GM10248 (cell line): ENCODE measurements at regions of chr13 and their contacts with region 1.

Region 1: GRCh38 chr13:102913914-102914313 is 68.1 kb downstream of the ERCC5 start:
- DNase-seq: no peak
- CTCF ChIP-seq: no peak

Region 2: GRCh38 chr13:102870677-102871415 is 43.1 kb before region 1 on chr13:
- CTCF ChIA-PET with region 1: interaction called, 12 read pairs
- POLR2A ChIA-PET with region 1: no interaction called
- DNase-seq: peak; percentile 73
- CTCF ChIP-seq: peak; percentile 72

Region 3: DNA sequence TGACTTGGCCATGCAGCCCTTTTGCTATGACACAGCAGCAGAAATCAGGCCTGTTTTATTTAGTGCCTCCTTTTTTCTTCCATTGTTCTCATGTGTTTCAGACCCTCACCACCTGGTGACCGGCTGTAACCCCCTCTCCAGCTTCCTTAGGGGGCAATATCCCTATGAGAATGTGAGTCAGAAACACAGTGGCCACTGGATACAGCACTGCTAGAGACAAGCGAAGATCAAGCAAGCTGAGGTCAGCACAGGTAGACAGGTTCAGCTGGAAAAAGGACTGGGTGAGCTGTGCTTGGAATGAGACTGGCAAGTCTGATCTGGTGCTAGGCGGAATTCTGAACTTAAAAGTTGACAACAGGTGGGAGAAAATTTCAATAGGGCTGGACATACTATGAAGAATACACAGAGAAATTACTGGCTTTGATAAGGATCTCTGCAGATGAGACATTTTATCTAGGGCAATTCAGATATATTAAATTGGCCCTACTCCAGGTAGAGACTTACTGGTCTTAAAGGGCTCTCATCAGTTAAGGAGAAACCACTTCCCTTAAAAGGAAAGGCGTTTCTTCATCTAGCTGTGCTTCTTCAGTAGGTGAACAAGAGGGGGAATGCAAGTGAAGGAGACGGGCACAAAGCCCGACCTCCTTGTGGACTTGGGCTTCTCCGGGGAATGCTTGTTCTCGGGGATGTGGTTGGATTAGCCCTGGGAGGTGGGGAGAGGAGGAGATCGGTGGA is 15.2 kb after region 1 on chr13:
- CTCF ChIA-PET with region 1: interaction called, 23 read pairs
- POLR2A ChIA-PET with region 1: no interaction called
- DNase-seq: no peak
- CTCF ChIP-seq: no peak

Region 4: GRCh38 chr13:102970542-102970941 is 56.6 kb after region 1 on chr13:
- CTCF ChIA-PET with region 1: no interaction called
- POLR2A ChIA-PET with region 1: no interaction called
- DNase-seq: peak; percentile 58
- CTCF ChIP-seq: no peak

Region 5: GRCh38 chr13:103055166-103055565 is 141.3 kb after region 1 on chr13:
- CTCF ChIA-PET with region 1: no interaction called
- POLR2A ChIA-PET with region 1: no interaction called
- DNase-seq: no peak
- CTCF ChIP-seq: no peak

Region 6: DNA sequence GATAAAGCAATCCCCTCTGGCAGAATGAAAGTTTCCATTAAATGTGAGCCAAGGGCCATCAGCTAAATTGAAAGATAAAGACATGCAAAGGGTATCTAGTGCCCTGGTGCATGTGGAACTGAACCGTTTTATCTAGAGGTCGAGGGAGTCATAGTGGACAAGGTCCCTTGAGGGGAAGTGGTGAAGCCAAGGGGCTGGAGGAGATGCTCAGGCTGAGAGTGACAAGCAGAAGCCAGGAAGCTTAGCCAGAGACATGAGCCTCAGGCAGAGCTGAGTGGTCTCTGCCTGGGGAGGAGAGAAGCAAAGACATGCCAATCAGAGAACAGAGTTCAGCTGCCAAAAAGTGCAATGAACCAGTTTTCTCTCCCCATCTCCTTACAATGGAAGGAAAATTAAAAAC is 220.4 kb after region 1 on chr13:
- CTCF ChIA-PET with region 1: interaction called, 10 read pairs
- POLR2A ChIA-PET with region 1: no interaction called
- DNase-seq: no peak
- CTCF ChIP-seq: no peak

Region 7: DNA sequence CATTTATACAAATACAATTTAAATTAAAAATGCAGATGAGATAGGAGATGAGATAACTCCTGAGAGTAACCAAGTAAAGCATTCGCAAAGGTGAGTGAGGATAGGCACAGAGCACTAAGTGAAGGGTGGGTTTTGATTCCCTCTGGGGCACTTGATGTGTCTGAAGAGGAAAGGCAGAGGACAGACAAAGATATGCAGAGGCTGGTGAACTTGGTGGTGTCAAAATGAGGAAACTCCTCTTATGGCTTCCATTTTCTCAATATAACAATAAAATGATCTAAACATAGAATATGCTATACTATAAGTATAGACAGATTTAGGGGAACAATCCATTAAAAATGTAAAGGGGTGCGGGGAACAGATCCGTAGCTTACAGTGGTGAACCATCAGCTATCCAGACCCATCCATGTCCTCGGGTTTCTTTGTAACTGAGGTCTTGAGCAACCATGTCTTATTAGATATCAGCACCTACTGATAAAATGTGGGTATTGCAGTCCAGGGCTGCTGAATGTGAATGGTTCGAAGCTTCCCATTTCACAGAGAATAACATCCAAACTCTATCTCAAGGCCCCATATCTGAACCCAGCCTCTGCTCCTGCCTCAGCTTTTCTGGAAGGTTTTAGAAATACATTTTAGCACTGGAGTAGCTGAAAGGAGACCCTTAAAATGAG is 226.2 kb after region 1 on chr13:
- CTCF ChIA-PET with region 1: interaction called, 71 read pairs
- POLR2A ChIA-PET with region 1: interaction called, 3 read pairs
- DNase-seq: peak; percentile 52
- CTCF ChIP-seq: peak; percentile 75

Region 8: GRCh38 chr13:103188713-103189326 is 274.9 kb after region 1 on chr13:
- CTCF ChIA-PET with region 1: interaction called, 14 read pairs
- POLR2A ChIA-PET with region 1: no interaction called
- DNase-seq: peak; percentile 24
- CTCF ChIP-seq: peak; percentile 50